Activated B cell treated with CpG ODN at 0.5 μM for 24 hours (primary cell): ENCODE measurements at regions of chr7 and their contacts with region 1.

Region 1: DNA sequence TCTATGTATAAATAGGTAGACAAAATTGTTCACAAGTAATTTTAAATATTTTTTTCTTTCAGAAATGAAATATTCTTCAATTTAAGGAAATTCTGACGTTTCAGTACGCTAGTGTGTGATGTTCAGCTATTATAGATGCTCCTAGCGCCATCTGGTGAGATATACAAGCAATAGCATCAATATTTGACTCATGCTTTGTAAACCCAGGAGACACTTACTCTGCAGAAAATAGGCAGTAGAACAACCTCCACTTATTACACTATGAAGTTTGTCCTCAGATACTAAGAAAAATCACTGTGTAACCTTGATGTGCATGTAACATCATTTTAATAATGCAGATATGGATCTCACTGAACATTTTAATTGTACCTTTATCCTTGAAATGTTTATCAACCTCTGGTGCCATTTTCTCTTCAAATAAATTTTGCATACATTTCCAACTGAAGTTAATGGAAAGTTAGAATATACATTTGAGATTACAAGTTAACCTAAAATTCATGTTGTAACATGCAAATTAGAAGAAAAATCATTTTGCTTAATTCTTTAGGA is 151.5 kb upstream of the FAM3C start:
- DNase-seq: no peak
- ATAC-seq: peak; percentile 90
- H3K4me3 Mint-ChIP-seq: no peak overlapping the region
- H3K27ac Mint-ChIP-seq: no peak overlapping the region
- H3K4me1 Mint-ChIP-seq: peaks cover 10% of the 10 kb centered on the region
- H3K27me3 Mint-ChIP-seq: no peaks in the 10 kb centered on the region
- CTCF ChIP-seq: peak; percentile 54

Region 2: DNA sequence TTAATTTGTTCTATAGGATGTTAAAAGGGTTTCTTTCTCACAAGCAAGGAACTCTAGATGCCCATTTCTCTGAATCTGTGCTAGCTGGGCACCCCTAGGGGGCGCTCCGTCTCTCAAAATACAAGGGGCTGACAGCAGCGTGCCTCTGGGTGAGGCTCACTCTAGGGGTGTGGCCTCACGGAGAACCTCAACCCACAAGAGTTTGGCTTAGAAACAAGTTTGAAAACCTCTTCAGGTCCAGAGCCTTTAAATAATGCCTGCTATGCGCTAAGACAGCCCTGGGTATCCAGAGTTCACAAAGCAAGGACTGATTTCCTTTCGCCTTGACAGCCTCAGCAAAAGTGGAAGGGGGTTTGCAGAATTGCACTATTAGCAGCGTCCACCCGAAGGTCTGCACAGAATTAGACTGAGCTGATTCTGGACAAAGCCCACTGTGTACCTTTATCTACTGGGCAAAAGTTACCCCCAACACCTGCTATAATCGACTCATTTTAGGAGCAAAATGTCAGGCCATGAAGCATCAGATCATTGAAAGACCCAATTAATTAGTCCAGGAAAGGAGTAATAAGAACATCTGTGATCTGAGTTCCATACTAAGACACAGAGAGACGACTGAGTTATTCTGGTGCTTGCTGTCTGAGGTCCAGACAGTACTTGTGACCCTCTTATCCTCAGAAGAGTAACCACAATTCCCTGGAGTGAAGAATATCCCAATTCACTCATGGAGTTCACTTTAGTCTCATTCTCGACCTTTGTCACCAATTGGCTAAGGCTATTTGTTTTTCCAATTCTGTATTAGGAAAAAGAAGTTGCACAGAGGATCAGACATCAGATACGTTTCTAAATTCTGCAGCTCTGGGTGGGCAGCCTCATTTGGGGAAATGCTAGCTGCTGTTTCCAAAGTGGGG is 559.7 kb before region 1 on chr7:
- CTCF ChIA-PET with region 1: no interaction called
- POLR2A ChIA-PET with region 1: no interaction called
- intact Hi-C with region 1: loop called (anchors 1 kb)
- DNase-seq: peak; percentile 68
- ATAC-seq: peak; percentile 95
- H3K4me3 Mint-ChIP-seq: peak overlapping the region; percentile 81
- H3K27ac Mint-ChIP-seq: no peak overlapping the region
- H3K4me1 Mint-ChIP-seq: peaks cover 23% of the 10 kb centered on the region
- H3K27me3 Mint-ChIP-seq: peaks cover 33% of the 10 kb centered on the region
- CTCF ChIP-seq: peak; percentile 95

Region 3: DNA sequence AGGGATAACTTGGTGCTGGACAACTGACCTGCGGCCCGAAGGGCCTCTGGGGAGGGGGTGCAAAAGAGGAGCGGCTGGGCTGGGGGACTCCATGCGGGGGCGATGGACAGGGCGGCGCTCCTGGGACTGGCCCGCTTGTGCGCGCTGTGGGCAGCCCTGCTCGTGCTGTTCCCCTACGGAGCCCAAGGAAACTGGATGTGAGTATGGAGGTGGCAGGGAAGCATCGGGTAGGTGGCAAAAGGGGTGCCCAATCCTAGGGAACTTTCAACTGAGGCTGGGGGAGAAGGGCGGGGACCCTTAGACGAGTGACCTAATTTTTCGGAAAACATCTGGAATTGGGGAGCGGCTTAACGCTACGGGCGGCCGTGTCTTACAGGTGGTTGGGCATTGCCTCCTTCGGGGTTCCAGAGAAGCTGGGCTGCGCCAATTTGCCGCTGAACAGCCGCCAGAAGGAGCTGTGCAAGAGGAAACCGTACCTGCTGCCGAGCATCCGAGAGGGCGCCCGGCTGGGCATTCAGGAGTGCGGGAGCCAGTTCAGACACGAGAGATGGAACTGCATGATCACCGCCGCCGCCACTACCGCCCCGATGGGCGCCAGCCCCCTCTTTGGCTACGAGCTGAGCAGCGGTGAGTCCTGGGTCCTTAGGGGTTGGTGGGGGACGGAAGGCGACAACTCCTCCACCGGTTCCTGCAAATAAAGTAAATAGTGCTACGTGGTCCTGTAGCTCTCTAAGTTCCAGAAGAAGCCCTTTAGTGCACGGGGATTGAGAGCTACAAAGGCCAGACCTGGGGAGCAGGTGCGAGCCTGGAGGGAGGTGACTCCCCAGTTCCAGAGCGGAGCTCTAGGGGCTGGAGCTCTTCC is 218.2 kb before region 1 on chr7:
- CTCF ChIA-PET with region 1: interaction called, 4 read pairs
- POLR2A ChIA-PET with region 1: interaction called, 3 read pairs
- intact Hi-C with region 1: loop called (anchors 1 kb)
- DNase-seq: peak; percentile 43
- ATAC-seq: peak; percentile 49
- H3K4me3 Mint-ChIP-seq: peak overlapping the region; percentile 91
- H3K27ac Mint-ChIP-seq: peak overlapping the region; percentile 85
- H3K4me1 Mint-ChIP-seq: peaks cover 36% of the 10 kb centered on the region
- H3K27me3 Mint-ChIP-seq: peaks cover 11% of the 10 kb centered on the region
- CTCF ChIP-seq: no peak

Region 4: DNA sequence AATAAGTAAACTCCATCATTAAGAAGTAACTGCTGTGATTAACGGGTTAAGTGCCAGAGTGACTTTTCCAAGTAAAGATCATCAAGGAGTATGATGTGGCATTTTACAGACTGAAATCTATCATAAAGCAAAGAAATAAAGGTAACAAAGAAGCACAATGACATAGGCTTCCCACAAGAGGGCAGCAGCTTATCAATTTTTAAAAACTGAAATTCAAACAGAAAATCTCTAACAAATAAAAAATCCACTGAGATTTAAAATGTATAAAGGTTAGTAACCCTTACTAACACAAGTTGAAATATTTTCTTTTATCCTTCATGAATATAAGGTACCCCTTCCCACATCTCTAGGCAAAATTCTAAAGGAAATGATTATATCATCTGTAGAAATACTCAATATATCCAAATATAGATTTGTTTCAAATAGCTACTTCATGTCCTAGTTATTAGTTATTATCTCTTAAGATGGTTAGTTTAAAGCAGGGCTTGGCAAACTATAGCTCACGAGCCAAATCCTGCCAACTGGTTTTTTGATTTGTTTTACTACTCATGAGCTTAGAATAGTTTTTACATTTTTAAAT is 180.7 kb before region 1 on chr7:
- CTCF ChIA-PET with region 1: interaction called, 106 read pairs
- POLR2A ChIA-PET with region 1: interaction called, 6 read pairs
- intact Hi-C with region 1: loop called (anchors 1 kb)
- DNase-seq: no peak
- ATAC-seq: peak; percentile 49
- H3K4me3 Mint-ChIP-seq: no peak overlapping the region
- H3K27ac Mint-ChIP-seq: peak overlapping the region; percentile 35
- H3K4me1 Mint-ChIP-seq: peaks cover 62% of the 10 kb centered on the region
- H3K27me3 Mint-ChIP-seq: no peaks in the 10 kb centered on the region
- CTCF ChIP-seq: peak; percentile 21

Region 5: DNA sequence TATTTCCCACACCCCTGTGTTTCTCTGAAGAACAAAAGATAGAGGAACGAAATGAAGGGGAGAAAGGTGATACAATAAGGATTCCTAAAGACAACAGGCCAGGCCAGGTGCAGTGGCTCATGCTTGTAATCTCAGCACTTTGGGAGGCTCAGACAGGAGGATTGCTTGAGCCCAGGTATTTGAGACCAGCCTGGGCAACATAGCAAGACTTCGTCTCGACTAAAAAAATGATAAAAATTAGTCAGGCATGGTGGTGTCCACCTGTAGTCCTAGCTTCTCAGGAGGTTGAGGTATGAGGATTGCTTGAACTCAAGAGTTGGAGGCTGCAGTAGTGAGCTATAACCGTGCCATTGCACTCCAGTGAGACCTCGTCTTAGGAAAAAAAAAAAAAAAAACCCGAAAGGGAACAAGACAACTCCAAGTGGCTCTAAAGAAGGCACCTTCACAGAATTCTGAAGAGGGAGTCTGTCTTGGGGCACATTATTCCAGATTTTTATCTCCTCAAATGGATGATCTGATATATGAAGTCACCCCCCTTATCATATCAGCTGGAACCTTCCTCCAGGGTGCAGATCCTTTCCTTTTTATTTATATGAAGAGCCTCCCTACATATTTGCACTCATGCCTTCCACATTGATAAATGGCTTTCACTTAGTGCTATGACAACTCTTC is 110.0 kb before region 1 on chr7:
- CTCF ChIA-PET with region 1: interaction called, 4 read pairs
- POLR2A ChIA-PET with region 1: interaction called, 7 read pairs
- intact Hi-C with region 1: loop called (anchors 2 kb)
- DNase-seq: no peak
- ATAC-seq: peak; percentile 9
- H3K4me3 Mint-ChIP-seq: peak overlapping the region; percentile 82
- H3K27ac Mint-ChIP-seq: peak overlapping the region; percentile 89
- H3K4me1 Mint-ChIP-seq: peaks cover 47% of the 10 kb centered on the region
- H3K27me3 Mint-ChIP-seq: no peaks in the 10 kb centered on the region
- CTCF ChIP-seq: no peak

Region 6: GRCh38 chr7:121994625-121995410 is 447.2 kb after region 1 on chr7:
- CTCF ChIA-PET with region 1: interaction called, 4 read pairs
- POLR2A ChIA-PET with region 1: no interaction called
- intact Hi-C with region 1: loop called (anchors 2 kb)
- DNase-seq: no peak
- ATAC-seq: peak; percentile 86
- H3K4me3 Mint-ChIP-seq: no peak overlapping the region
- H3K27ac Mint-ChIP-seq: no peak overlapping the region
- H3K4me1 Mint-ChIP-seq: no peaks in the 10 kb centered on the region
- H3K27me3 Mint-ChIP-seq: peaks cover 2% of the 10 kb centered on the region
- CTCF ChIP-seq: peak; percentile 83